ENCODE measurements at regions of chr13 and their contacts with region 1.

Region 1: DNA sequence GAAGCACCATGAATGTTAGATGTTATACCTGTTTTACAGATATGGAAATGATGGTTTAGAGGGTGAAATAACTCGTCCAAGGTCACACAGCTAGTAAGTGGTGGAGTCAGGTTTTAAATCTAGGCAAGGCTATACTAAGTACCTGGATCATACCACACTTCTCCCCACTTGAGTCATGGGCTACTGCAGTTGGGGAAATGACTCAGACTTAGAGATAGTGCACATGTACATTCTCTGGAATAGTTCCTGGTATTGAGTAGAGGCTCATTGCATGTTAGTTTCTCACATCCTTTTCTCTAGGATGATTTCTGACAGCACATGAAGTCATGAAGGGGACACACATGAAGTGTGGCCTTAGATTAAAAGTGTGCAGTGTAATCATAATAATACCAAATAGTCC is 76.2 kb upstream of the TNFSF11 start:
- DNase-seq: peak; percentile 65
- H3K4me3 Mint-ChIP-seq: peak overlapping the region; percentile 12
- H3K27ac Mint-ChIP-seq: peak overlapping the region; percentile 86
- H3K4me1 Mint-ChIP-seq: peaks cover 54% of the 10 kb centered on the region
- H3K27me3 Mint-ChIP-seq: no peaks in the 10 kb centered on the region

Region 2: DNA sequence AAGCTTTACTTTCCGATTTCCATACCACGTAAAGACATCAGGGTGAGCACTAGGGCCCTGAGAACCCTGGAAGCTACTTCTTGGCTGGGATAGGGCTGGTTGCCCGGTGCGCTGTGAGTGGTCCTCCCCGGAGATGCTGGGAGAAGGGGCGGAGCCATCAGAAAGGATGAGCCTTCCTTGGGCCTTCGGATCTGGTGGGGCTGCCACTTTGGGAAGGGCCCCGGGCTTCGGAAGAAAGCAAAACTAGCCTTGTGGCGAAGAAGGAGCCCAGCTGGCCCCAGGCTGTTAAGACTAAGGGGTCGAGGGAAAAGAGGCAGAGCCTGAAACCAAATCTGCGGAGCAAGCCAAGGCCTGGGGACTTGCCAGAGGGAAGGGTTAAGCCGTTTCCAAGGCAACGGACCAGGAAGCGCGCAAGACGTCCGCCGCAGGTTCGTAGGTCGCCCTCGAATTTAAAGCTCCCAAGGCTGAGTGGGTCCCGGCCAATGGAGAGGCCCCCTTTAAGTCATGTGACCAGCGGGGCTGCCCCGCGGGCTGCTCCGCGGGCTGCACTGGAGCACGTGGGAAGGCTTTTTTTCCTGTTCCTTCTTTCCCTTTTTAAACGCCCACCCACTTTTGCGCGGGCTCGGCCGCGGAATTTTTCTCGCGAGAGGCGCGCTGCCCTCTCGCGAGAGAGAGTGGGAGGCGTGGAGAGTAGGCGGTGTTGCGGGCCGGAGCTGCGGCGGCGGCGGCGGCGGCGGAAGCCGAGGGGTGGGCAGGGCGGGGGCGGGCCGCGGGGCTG is 226.3 kb before region 1 on chr13:
- CTCF ChIA-PET with region 1: interaction called, 3 read pairs
- POLR2A ChIA-PET with region 1: interaction called, 16 read pairs
- intact Hi-C with region 1: loop called (anchors 2 kb)
- DNase-seq: peak; percentile 96
- H3K4me3 Mint-ChIP-seq: peak overlapping the region; percentile 98
- H3K27ac Mint-ChIP-seq: peak overlapping the region; percentile 98
- H3K4me1 Mint-ChIP-seq: peaks cover 43% of the 10 kb centered on the region
- H3K27me3 Mint-ChIP-seq: no peaks in the 10 kb centered on the region

Region 3: DNA sequence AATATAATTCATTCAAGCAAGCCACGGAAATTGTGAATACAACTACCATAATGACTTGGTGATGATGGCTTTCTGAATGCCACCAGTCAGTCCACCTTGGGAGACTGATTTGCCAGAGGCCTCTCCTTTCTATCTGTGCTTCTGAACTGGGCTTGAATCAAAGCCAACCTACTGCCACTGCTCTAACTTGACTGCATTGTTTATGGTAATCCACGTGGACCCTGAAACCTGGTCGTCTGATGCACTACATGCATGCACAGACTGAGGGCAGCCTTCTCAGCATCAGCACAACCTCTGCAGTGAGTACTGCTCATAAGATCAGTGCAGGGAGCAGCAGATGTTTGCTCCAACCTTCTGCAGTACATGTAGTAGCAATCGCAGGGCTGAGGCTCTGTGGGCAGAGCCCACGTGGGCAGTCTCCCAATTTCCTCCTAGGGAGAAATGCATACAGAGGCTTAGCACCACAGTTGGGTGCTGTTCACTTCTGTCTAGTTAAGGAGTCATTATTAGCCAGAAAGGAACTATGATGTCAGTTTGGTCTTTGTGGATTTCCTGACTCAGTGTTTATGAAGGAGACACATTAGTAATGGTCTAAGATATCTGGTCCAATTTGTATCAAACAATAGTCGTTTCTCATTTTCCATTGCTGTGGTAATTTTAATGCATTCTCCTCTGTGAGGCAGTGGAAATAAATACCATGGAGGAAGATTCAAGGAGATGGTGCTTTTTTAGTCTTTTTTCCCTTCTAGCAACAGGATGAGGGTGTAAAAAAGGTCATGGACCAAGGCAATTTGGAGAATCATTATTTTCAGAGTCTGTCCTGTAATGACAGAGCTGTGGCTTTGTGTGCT is 143.3 kb before region 1 on chr13:
- CTCF ChIA-PET with region 1: interaction called, 3 read pairs
- POLR2A ChIA-PET with region 1: interaction called, 6 read pairs
- intact Hi-C with region 1: loop called (anchors 1 kb)
- DNase-seq: peak; percentile 66
- H3K4me3 Mint-ChIP-seq: peak overlapping the region; percentile 54
- H3K27ac Mint-ChIP-seq: peak overlapping the region; percentile 98
- H3K4me1 Mint-ChIP-seq: peaks cover 70% of the 10 kb centered on the region
- H3K27me3 Mint-ChIP-seq: no peaks in the 10 kb centered on the region

Region 4: GRCh38 chr13:42405665-42406390 is 92.0 kb before region 1 on chr13:
- CTCF ChIA-PET with region 1: interaction called, 3 read pairs
- POLR2A ChIA-PET with region 1: interaction called, 11 read pairs
- intact Hi-C with region 1: loop called (anchors 1 kb)
- DNase-seq: peak; percentile 89
- H3K4me3 Mint-ChIP-seq: peak overlapping the region; percentile 59
- H3K27ac Mint-ChIP-seq: peak overlapping the region; percentile 93
- H3K4me1 Mint-ChIP-seq: peaks cover 75% of the 10 kb centered on the region
- H3K27me3 Mint-ChIP-seq: no peaks in the 10 kb centered on the region

Region 5: GRCh38 chr13:42553098-42554046 is 55.6 kb after region 1 on chr13:
- CTCF ChIA-PET with region 1: no interaction called
- POLR2A ChIA-PET with region 1: no interaction called
- intact Hi-C with region 1: no loop called
- DNase-seq: no peak
- H3K4me3 Mint-ChIP-seq: no peak overlapping the region
- H3K27ac Mint-ChIP-seq: no peak overlapping the region
- H3K4me1 Mint-ChIP-seq: peaks cover 11% of the 10 kb centered on the region
- H3K27me3 Mint-ChIP-seq: peaks cover 2% of the 10 kb centered on the region

Region 6: GRCh38 chr13:42574435-42575311 is 76.9 kb after region 1 on chr13:
- CTCF ChIA-PET with region 1: no interaction called
- POLR2A ChIA-PET with region 1: interaction called, 3 read pairs
- intact Hi-C with region 1: loop called (anchors 1 kb)
- DNase-seq: peak; percentile 75
- H3K4me3 Mint-ChIP-seq: peak overlapping the region; percentile 73
- H3K27ac Mint-ChIP-seq: peak overlapping the region; percentile 55
- H3K4me1 Mint-ChIP-seq: peaks cover 34% of the 10 kb centered on the region
- H3K27me3 Mint-ChIP-seq: peaks cover 26% of the 10 kb centered on the region

Region 7: DNA sequence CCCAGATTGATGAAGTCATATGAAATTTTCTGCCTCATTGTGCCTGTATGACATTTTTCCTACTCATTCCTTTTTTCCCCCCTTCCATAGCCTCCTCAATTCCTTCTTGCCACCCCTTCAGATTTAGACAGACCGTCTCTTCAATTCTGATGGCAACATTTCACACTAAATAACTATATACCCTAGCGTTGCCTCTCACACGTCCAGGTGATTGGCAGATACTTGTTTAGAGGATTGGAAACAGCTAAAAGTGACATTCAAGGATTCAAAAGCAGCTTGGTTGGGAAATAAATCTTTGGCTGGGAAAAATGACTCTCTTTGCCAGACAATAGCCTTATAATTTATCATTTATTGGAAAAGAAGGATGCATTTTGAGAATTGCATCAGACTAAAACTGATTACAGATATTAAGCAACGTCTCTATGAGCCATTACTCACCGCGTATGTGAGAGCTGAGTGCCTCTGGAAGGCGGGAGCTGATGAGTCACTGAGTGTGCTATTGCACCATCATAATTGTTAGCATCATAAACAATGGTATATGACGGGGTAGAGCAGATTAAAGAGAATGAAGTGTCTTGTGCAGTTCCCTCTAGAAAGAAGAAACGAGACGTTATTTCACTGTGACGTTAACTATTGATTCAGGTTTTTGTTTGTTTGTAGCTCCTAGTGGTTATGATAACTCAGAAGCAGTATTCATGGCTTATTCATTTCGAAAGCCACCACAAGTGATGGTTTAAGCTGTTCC is 222.5 kb after region 1 on chr13:
- CTCF ChIA-PET with region 1: no interaction called
- POLR2A ChIA-PET with region 1: no interaction called
- intact Hi-C with region 1: no loop called
- DNase-seq: peak; percentile 46
- H3K4me3 Mint-ChIP-seq: no peak overlapping the region
- H3K27ac Mint-ChIP-seq: no peak overlapping the region
- H3K4me1 Mint-ChIP-seq: peaks cover 11% of the 10 kb centered on the region
- H3K27me3 Mint-ChIP-seq: peaks cover 14% of the 10 kb centered on the region

Region 8: DNA sequence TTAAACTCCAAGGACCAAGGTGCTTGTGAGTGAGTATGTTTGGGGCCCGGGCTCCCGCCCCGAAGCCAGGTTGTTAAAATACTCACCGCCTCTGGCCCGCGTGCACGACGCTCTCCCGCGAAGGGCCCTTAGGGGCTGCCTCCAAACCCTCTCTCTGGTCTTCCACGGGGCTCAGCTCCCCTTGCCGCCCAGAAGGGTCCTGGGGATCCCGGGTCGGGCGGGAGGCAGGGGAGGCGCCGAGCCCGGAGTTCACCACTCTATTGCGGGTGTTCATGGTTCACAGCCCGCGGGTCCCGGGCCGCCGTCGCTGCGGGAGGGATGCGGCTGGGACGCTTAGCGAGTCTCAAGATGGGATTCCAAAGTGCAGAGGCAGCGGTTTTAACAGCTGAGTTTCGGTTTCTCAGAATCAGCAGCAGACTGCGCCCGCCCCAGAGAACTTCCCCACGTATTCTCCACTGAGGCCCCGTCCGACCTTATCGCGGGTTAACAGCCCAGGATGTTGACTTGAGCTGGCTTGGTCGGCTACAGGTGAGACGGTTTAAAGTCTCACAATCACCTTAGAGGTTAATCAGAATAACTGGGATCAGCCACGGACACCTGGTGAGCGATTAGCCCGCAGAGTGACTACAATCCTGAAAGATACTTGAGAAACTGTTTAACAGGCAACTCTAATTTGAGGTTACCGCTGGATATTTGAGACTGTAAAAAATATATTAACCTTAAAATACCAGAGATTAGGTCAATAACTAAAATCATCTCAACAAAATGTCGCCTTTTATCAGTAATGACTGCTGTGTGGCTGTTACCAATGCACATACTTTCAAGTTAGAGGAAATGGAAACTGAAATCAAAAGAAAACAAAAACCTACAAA is 494.3 kb after region 1 on chr13 and contains the start of gene EPSTI1:
- CTCF ChIA-PET with region 1: no interaction called
- POLR2A ChIA-PET with region 1: no interaction called
- intact Hi-C with region 1: loop called (anchors 10 kb)
- DNase-seq: peak; percentile 84
- H3K4me3 Mint-ChIP-seq: peak within 1 kb of the TSS; percentile 86
- H3K27ac Mint-ChIP-seq: peak within 1 kb of the TSS; percentile 97
- H3K4me1 Mint-ChIP-seq: peaks cover 43% of the 10 kb centered on the region
- H3K27me3 Mint-ChIP-seq: no peaks in the 10 kb centered on the region
- total RNA-seq, gene EPSTI1: 21.1 to 21.9 TPM

Region 9: DNA sequence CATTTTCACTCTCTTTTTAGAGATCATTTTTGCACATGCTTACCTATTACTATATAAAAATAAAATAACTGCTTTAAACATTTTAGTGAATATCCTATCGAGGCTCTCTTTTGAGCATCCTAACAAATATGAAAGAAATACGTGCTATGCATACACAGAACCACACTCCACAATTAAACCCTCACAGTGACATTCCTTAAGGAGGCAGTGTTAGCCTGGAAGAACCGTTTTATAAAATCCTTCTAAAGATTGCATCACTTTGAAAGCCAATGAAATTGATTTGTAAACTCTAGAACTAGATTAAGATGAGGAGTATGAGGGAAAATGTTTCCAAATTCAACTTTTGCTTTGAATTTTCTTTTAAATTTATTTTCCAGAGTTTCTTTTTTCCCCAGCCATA is 1300.1 kb after region 1 on chr13:
- CTCF ChIA-PET with region 1: no interaction called
- POLR2A ChIA-PET with region 1: no interaction called
- intact Hi-C with region 1: loop called (anchors 1 kb)
- DNase-seq: no peak
- H3K4me3 Mint-ChIP-seq: no peak overlapping the region
- H3K27ac Mint-ChIP-seq: no peak overlapping the region
- H3K4me1 Mint-ChIP-seq: peaks cover 33% of the 10 kb centered on the region
- H3K27me3 Mint-ChIP-seq: peaks cover 30% of the 10 kb centered on the region